ENCODE measurements at regions of chr10 and their contacts with region 1.

Region 1: GRCh38 chr10:15824498-15824897 is 35.8 kb downstream of the MINDY3 start:
- DNase-seq: no peak

Region 2: DNA sequence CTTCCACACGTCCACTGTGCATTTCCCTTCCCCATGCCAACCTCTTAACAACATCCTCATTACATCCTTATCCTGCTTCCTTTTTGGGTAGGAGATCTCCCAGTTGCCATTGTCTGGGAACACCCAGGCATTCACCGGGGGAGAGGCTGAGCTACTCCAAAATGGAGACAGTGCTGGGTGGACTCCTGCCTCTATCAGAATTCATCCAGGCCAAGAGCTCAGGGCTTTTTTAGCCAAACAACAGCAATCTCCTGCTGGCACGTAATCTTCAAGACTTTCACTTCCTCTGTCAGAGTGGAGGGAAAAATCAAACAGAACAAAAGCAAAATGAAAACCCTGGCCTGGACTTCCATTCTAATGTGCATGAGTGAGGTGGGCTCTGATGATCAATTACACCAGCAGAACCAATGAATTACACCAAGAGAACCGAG is 1992.8 kb before region 1 on chr10:
- intact Hi-C with region 1: no loop called
- DNase-seq: no peak

Region 3: GRCh38 chr10:15719899-15720634 is 104.4 kb before region 1 on chr10 and contains the start of gene ITGA8:
- intact Hi-C with region 1: loop called (anchors 5 to 10 kb)
- DNase-seq: peak; percentile 82
- total RNA-seq, gene ITGA8: 221 to 227 TPM

Region 4: DNA sequence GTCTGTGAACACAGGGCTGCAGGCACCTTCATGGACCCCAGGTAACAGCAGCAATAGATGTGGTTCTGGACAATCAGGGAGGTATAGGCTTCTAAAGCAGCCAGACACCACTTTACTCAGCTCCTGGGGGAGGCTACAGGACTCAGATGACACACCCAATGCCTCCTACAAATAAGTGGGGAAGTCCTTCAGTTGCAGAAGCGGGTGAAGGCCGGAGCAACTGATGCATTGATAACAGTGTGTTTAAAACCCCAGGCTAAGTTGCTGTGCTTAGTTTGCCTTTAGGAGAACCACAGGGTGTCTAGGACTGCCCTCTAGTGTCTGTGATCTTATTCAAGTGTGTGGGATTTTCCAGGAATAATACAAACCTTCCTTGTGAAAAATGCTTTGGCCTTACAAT is 98.9 kb before region 1 on chr10:
- intact Hi-C with region 1: loop called in 1 of 2 experiments (anchors 10 kb)
- DNase-seq: no peak

Region 5: DNA sequence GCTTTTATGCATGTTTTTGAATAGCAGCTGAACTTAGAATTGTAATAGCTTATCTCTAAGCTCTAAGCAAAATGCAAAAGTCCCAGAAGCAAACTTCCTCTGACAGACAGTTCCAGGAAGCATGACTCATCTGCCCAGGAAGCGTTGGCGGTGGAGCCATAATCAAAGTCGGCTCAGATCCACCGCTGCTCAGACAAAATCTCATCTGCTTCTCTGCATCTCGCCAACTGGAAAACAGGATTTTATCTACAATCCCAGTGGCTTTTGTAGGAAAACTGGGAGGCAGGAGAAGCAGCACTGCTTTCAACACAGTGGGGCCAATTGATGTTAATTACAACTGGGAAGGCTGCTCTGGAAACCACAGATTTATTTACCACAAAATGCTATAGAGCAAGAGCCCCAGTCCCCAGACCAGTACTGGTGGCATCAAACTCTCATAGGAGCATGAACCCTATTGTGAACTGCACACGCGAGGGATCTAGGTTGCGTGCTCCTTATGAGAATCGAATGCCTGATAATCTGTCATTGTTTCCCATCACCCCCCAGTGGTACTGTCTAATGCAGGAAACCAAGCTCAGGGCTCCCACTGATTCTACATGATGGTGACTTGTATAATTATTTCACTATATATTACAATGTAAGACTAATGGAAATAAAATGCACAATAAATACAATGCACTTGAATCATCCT is 1205.2 kb after region 1 on chr10:
- intact Hi-C with region 1: no loop called
- DNase-seq: peak; percentile 88

Measured in posterior vena cava (tissue), 2 donors.